Activated CD8-positive, alpha-beta T cell treated with anti-CD3 and anti-CD28 coated beads, Interleukin-2, amount 10 ng/mL, durations not matched to agents 7 days and 5 days (primary cell): ENCODE measurements at regions of chr7 and their contacts with region 1.

Region 1: GRCh38 chr7:102390697-102391484 is 5.3 kb upstream of the PRKRIP1 start:
- DNase-seq: peak; percentile 77
- ATAC-seq: peak; percentile 79
- H3K4me3 Mint-ChIP-seq: no peak overlapping the region
- H3K27ac Mint-ChIP-seq: no peak overlapping the region
- H3K4me1 Mint-ChIP-seq: peaks cover 5% of the 10 kb centered on the region
- H3K27me3 Mint-ChIP-seq: no peaks in the 10 kb centered on the region

Region 2: DNA sequence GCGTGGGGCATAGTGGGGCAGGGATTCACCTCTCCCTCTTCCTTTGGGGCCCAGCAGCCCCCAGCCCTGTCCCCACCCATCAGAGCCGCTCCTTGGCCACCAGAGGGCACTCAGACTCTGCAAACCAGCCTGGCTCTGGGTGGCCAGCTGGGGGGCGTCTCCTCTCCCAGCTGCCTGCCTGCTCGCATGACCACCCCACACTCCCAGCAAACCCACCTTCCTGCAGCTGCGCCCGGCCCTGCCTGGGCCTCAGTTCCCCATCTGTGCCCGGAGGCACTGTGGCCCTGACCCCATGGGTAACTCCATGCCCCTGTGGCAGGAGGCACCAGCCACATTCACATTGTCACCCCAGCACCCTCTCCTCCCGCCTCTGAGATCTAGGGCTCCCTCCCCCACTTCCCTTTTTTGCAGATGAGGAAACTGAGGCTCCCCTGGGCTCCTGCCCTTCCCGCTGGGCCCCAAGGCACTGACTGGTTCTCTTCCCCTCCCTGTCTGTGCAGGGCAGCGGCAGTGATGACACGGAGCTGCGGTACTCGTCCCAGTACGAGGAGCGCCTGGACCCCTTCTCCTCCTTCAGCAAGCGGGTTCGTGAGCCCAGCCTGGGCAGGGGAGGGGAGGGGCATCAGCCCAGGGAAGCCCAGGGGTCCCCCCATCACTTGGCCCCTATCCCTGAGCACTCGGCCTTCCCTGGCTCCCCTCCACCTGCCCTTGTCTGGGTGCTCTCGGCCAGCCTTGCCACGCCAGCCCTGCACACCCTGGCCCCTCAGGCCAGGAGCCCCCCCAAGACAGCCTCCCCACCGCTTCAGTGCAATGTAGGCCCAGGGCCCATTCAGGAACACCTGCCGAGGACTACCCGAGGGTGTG is 111.1 kb before region 1 on chr7:
- CTCF ChIA-PET with region 1: interaction called, 20 read pairs
- POLR2A ChIA-PET with region 1: interaction called, 5 read pairs
- DNase-seq: peak; percentile 65
- ATAC-seq: peak; percentile 89
- H3K4me3 Mint-ChIP-seq: no peak overlapping the region
- H3K27ac Mint-ChIP-seq: no peak overlapping the region
- H3K4me1 Mint-ChIP-seq: peaks cover 10% of the 10 kb centered on the region
- H3K27me3 Mint-ChIP-seq: peaks cover 4% of the 10 kb centered on the region

Region 3: GRCh38 chr7:102313997-102314780 is 76.7 kb before region 1 on chr7:
- CTCF ChIA-PET with region 1: no interaction called
- POLR2A ChIA-PET with region 1: no interaction called
- DNase-seq: no peak
- ATAC-seq: no peak
- H3K4me3 Mint-ChIP-seq: no peak overlapping the region
- H3K27ac Mint-ChIP-seq: no peak overlapping the region
- H3K4me1 Mint-ChIP-seq: no peaks in the 10 kb centered on the region
- H3K27me3 Mint-ChIP-seq: no peaks in the 10 kb centered on the region

Region 4: DNA sequence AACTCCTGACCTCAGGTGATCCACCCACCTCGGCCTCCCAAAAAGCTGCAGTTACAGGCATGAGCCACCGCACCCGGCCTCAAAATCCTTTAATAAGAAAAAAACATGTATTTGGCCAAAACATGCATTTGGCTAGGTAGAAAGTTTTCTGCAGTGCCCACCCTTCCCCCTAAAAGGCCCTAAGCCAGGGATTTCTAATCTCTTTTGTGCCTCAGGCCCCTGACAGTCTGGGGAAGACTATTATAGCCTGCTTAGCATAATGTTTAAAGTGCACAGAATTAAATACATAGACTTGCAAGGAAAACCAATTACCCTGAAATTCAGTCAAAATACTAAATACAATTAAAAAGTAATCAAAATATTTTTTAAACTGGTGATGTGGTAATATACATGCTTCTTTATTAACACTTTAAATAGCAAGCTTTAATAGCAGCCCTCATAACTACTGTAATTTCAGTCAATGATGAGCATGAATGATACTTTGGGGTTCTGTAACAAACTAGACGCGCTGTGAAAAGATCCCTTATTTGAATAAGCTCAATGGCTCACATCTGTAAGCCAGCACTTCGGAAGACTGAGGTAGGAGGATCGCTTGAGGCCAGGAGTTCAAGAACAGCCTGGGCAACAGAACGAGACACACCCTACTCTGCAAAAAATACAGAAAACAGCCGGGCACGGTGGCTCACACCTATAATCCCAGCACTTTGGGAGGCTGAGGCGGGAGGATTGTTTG is 64.6 kb before region 1 on chr7:
- CTCF ChIA-PET with region 1: no interaction called
- POLR2A ChIA-PET with region 1: no interaction called
- DNase-seq: no peak
- ATAC-seq: no peak
- H3K4me3 Mint-ChIP-seq: no peak overlapping the region
- H3K27ac Mint-ChIP-seq: no peak overlapping the region
- H3K4me1 Mint-ChIP-seq: peaks cover 2% of the 10 kb centered on the region
- H3K27me3 Mint-ChIP-seq: peaks cover 7% of the 10 kb centered on the region

Region 5: GRCh38 chr7:102376964-102377466 is 13.9 kb before region 1 on chr7:
- CTCF ChIA-PET with region 1: no interaction called
- POLR2A ChIA-PET with region 1: no interaction called
- DNase-seq: no peak
- ATAC-seq: no peak
- H3K4me3 Mint-ChIP-seq: no peak overlapping the region
- H3K27ac Mint-ChIP-seq: no peak overlapping the region
- H3K4me1 Mint-ChIP-seq: peaks cover 8% of the 10 kb centered on the region
- H3K27me3 Mint-ChIP-seq: no peaks in the 10 kb centered on the region